GM18951 (cell line): ENCODE measurements at regions of chr1 and their contacts with region 1.

Region 1: GRCh38 chr1:87292684-87293493 is 35.8 kb upstream of the LMO4 start:
- POLR2A ChIP-seq: no peak

Region 2: DNA sequence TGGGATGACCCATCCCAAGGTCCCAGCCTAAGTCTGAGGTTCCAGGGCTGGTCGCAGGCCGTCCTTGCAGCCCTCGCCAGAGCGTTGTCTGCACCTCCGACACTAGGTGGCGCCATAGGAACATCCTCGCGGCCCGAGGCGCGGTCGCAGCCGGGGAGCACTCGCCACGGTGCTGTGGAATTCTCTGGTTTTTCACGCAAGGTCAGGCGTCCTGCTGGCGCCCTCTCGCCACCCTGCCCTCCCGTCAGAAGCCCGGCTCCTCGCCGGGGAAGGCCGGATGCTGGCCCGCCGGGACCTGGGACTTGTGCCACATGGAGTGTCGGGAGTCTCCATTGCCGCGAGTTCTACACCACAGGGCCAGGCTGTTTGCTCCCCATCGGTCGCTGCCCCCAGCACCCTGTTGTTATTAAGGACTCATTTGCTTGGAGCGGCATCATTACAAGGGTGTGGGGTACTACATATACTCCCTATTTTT is 161.0 kb before region 1 on chr1:
- in situ Hi-C with region 1: loop called (anchors 25 kb)
- POLR2A ChIP-seq: no peak

Region 3: GRCh38 chr1:88595355-88596002 is 1302.6 kb after region 1 on chr1:
- in situ Hi-C with region 1: loop called (anchors 25 kb)
- POLR2A ChIP-seq: no peak